ENCODE measurements at regions of chr3 and their contacts with region 1.

Region 1: GRCh38 chr3:15205934-15206661 is at the start of gene CAPN7:
- DNase-seq: peak; percentile 89
- H3K4me3 ChIP-seq: peak within 1 kb of the TSS; percentile 93 to 96 (median 95)
- H3K27ac ChIP-seq: peak within 1 kb of the TSS; percentile 70
- H3K4me1 ChIP-seq: peaks cover 8% of the 10 kb centered on the region
- H3K27me3 ChIP-seq: no peaks in the 10 kb centered on the region
- CTCF ChIP-seq: peak; percentile 21 to 43
- total RNA-seq, gene CAPN7: 32.8 to 46.0 TPM

Region 2: DNA sequence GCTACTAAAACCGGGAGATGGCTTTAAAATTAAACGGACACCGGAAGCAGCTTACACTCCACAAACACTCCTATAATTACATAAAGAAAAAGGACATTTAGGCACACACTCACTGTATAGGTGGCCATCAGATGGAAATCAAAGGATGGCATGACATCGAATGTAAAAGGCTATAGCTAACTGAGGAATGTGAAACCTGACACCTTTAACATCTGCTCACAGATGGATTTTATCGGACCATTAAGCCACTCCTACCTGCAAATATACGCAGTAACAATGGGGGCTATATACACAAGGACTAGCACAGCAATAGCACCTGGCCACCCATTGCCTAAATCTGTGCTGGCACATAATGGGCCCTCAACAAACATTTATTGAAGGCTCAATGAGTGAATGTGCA is 92.6 kb before region 1 on chr3:
- CTCF ChIA-PET with region 1: no interaction called
- dilution Hi-C with region 1: loop called (anchors 5 kb)
- in situ Hi-C with region 1: loop called in 1 of 2 experiments (anchors 10 kb)
- intact Hi-C with region 1: loop called (anchors 2 kb)
- DNase-seq: no peak
- H3K4me3 ChIP-seq: no peak overlapping the region
- H3K27ac ChIP-seq: no peak overlapping the region
- H3K4me1 ChIP-seq: no peaks in the 10 kb centered on the region
- H3K27me3 ChIP-seq: peaks cover 4% of the 10 kb centered on the region
- CTCF ChIP-seq: no peak

Region 3: DNA sequence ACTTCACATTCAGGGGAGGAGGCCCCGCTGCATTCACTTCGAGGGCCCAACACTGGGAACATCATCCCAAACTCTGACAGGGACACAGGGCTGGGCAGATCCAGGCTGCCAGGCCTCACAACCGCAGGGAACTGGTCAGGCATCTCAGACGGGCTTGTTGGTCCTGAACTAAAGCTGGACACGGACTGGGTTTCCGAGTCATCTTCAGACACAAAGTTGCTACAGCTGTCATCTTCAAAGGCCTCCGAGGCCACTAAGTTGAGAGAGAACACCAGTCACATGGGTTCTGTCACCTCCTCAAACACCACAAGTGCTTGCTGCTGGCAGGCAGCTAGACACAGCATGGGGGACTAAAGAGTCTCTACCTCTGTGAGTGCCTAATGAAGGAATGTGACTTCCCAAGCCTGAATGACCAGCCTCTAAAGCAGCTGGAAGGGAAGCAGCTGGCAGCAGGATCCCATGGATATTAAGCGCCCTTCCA is 50.8 kb after region 1 on chr3:
- CTCF ChIA-PET with region 1: no interaction called
- dilution Hi-C with region 1: loop called (anchors 5 kb)
- in situ Hi-C with region 1: no loop called
- intact Hi-C with region 1: loop called (anchors 5 kb)
- DNase-seq: no peak
- H3K4me3 ChIP-seq: no peak overlapping the region
- H3K27ac ChIP-seq: no peak overlapping the region
- H3K4me1 ChIP-seq: peaks cover 14% of the 10 kb centered on the region
- H3K27me3 ChIP-seq: no peaks in the 10 kb centered on the region
- CTCF ChIP-seq: no peak

Region 4: GRCh38 chr3:15405448-15406050 is 199.5 kb after region 1 on chr3:
- CTCF ChIA-PET with region 1: interaction called, 5 read pairs
- dilution Hi-C with region 1: no loop called
- in situ Hi-C with region 1: loop called in 1 of 2 experiments (anchors 10 kb)
- intact Hi-C with region 1: loop called (anchors 1 kb)
- DNase-seq: peak; percentile 38
- H3K4me3 ChIP-seq: no peak overlapping the region
- H3K27ac ChIP-seq: no peak overlapping the region
- H3K4me1 ChIP-seq: no peaks in the 10 kb centered on the region
- H3K27me3 ChIP-seq: no peaks in the 10 kb centered on the region
- CTCF ChIP-seq: peak; percentile 58 to 61

Region 5: GRCh38 chr3:15557511-15557946 is 351.4 kb after region 1 on chr3:
- CTCF ChIA-PET with region 1: no interaction called
- dilution Hi-C with region 1: no loop called
- in situ Hi-C with region 1: no loop called
- intact Hi-C with region 1: loop called (anchors 2 kb)
- DNase-seq: peak; percentile 77
- H3K4me3 ChIP-seq: no peak overlapping the region
- H3K27ac ChIP-seq: no peak overlapping the region
- H3K4me1 ChIP-seq: no peaks in the 10 kb centered on the region
- H3K27me3 ChIP-seq: no peaks in the 10 kb centered on the region
- CTCF ChIP-seq: peak; percentile 29 to 40